ENCODE measurements at regions of chr3 and their contacts with region 1.

Region 1: DNA sequence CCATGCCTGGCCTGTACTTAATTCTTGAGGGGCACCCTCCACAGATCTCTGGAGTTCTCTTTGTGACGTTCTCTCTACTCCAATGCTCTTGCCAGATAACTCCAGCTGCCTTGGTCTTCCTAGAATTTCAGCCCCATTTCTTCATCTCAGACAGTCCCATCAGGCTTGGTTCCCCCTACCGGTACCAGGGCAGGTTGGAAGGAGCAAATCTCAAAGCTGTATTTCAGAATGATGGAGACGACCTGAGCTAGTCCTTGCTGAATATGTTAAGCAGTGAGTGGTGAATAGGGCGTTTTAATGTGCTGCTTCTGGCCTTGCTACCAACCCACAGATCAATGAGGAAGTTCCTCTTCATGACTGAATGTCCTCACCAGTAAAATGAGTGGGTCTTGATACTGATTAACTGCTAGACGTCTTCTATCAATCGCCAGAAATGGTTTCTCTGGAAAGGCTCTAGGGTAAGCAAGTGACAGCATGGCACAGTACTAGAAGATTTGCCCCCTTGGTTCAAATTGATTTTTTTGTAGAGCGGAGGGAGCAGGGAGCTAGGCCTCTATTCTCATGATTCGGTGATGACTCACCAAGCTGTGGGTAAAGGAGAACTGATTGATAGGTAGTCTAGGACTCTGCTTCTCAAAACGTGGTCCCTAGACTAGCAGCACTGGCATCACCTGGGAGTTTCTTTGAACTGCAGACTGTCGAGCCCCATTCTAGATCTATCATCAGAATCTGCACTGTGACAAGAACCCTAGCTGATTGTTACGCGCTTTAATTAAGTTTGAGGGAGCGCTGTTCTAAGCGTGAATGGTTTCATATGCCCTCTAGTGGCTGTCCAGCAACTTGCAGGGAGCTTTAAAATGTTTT is 67.8 kb downstream of the UBP1 start:
- DNase-seq: no peak
- ATAC-seq: peak; percentile 74

Region 2: DNA sequence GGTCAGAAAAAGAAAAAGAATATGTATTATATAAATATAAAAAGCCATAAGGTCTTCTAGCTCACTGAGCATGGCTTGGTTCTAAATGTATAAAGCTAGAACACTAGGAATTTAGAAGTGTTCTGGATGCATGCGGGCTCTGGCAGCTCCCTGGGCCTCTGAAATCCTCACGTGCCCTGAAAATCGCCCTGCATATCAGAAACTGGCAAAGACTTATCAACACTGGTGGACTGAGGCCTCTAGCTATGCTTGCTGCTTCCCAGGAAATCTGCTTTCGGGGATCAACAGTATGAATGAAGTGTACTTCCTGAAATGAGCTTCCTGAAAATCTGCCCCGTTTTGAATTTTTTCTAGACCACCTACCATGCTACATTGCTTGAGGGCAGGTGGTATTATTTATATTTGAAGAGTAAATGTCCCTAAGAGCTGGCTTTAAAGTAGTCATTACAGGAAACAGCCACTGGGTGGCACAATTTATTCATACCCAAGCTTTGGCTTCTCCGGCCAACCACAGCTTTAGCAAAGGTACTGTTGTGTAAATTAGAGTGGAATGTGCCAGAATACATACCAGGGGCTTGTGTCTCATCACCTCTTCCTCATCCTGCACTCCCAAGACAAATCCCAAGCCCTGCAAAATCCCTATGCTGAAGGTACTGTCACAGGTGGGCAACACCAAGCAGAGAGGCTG is 241.0 kb before region 1 on chr3:
- intact Hi-C with region 1: loop called (anchors 5 kb)
- DNase-seq: no peak
- ATAC-seq: peak; percentile 86